GM12878 (cell line): ENCODE measurements at regions of chr5 and their contacts with region 1.

Region 1: DNA sequence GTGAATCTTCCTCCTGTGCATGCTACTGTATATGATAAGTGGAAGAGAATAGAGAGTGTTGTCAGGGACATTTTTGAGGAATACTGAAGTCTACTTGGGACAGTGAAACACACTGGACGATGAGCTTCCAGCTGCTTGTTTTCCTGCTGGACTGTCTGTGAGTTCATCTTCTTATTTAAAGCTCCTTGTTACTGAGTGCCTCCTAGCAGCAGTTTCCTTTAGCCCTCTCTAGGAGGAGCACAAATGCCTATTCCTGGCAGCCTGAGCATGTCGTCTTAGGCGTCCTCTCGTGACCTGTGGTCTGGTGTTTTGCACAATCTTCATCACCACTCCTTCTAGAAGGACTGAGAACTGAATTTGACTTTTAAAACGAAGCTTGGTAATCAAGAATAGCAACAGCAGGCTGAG is 43.8 kb downstream of the ANKRD33B start:
- DNase-seq: peak; percentile 63
- ATAC-seq: peak; percentile 73
- H3K4me3 ChIP-seq: peak overlapping the region; percentile 16
- H3K27ac ChIP-seq: peak overlapping the region; percentile 87
- H3K4me1 ChIP-seq: peaks cover 56% of the 10 kb centered on the region
- H3K27me3 ChIP-seq: no peaks in the 10 kb centered on the region
- CTCF ChIP-seq: peak; percentile 32 to 52 (median 32); a peak in 4 of 6 replicates
- EP300 ChIP-seq: peak; percentile 58 to 63; a peak in 2 of 4 replicates
- POLR2A ChIP-seq: no peak
- RAD21 ChIP-seq: peak; percentile 51

Region 2: GRCh38 chr5:10583663-10584572 is 23.8 kb before region 1 on chr5:
- CTCF ChIA-PET with region 1: interaction called, 4 read pairs
- POLR2A ChIA-PET with region 1: interaction called, 10 read pairs
- RAD21 ChIA-PET with region 1: interaction called, 46 read pairs
- SMC1A ChIA-PET with region 1: interaction called, 10 read pairs
- in situ Hi-C with region 1: no loop called
- intact Hi-C with region 1: no loop called
- DNase-seq: no peak
- ATAC-seq: no peak
- H3K4me3 ChIP-seq: no peak overlapping the region
- H3K27ac ChIP-seq: peak overlapping the region; percentile 20; the same call in 1 of the 2 replicates
- H3K4me1 ChIP-seq: peaks cover 88% of the 10 kb centered on the region
- H3K27me3 ChIP-seq: no peaks in the 10 kb centered on the region
- CTCF ChIP-seq: no peak
- EP300 ChIP-seq: no peak
- POLR2A ChIP-seq: no peak
- RAD21 ChIP-seq: no peak

Region 3: GRCh38 chr5:10595678-10596309 is 11.9 kb before region 1 on chr5:
- CTCF ChIA-PET with region 1: interaction called, 3 read pairs
- POLR2A ChIA-PET with region 1: interaction called, 21 read pairs
- RAD21 ChIA-PET with region 1: interaction called, 10 read pairs
- SMC1A ChIA-PET with region 1: interaction called, 19 read pairs
- in situ Hi-C with region 1: no loop called
- intact Hi-C with region 1: no loop called
- DNase-seq: no peak
- ATAC-seq: peak; percentile 59
- H3K4me3 ChIP-seq: peak overlapping the region; percentile 34; the same call in 1 of the 2 replicates
- H3K27ac ChIP-seq: peak overlapping the region; percentile 48
- H3K4me1 ChIP-seq: peaks cover 89% of the 10 kb centered on the region
- H3K27me3 ChIP-seq: no peaks in the 10 kb centered on the region
- CTCF ChIP-seq: no peak
- EP300 ChIP-seq: peak in 1 of 2 experiments; percentile 24; a peak in 1 of 4 replicates
- POLR2A ChIP-seq: no peak
- RAD21 ChIP-seq: no peak

Region 4: GRCh38 chr5:10635257-10635866 is 27.7 kb after region 1 on chr5:
- CTCF ChIA-PET with region 1: interaction called, 157 read pairs
- POLR2A ChIA-PET with region 1: interaction called, 14 read pairs
- RAD21 ChIA-PET with region 1: interaction called, 79 read pairs
- SMC1A ChIA-PET with region 1: interaction called, 192 read pairs
- in situ Hi-C with region 1: no loop called
- intact Hi-C with region 1: loop called (anchors 1 kb)
- DNase-seq: peak; percentile 94
- ATAC-seq: peak; percentile 66
- H3K4me3 ChIP-seq: peak overlapping the region; percentile 51
- H3K27ac ChIP-seq: peak overlapping the region; percentile 93
- H3K4me1 ChIP-seq: peaks cover 59% of the 10 kb centered on the region
- H3K27me3 ChIP-seq: no peaks in the 10 kb centered on the region
- CTCF ChIP-seq: no peak
- EP300 ChIP-seq: peak; percentile 89 to 98
- POLR2A ChIP-seq: peak; percentile 39; the same call in 1 of the 2 replicates
- RAD21 ChIP-seq: peak; percentile 5; the same call in 1 of the 2 replicates

Region 5: GRCh38 chr5:10689391-10690081 is 81.9 kb after region 1 on chr5:
- CTCF ChIA-PET with region 1: interaction called, 15 read pairs
- POLR2A ChIA-PET with region 1: no interaction called
- RAD21 ChIA-PET with region 1: interaction called, 13 read pairs
- SMC1A ChIA-PET with region 1: interaction called, 4 read pairs
- in situ Hi-C with region 1: no loop called
- intact Hi-C with region 1: no loop called
- DNase-seq: no peak
- ATAC-seq: peak; percentile 75
- H3K4me3 ChIP-seq: no peak overlapping the region
- H3K27ac ChIP-seq: no peak overlapping the region
- H3K4me1 ChIP-seq: peaks cover 19% of the 10 kb centered on the region
- H3K27me3 ChIP-seq: no peaks in the 10 kb centered on the region
- CTCF ChIP-seq: peak; percentile 36 to 79 (median 67); a peak in 5 of 6 replicates
- EP300 ChIP-seq: no peak
- POLR2A ChIP-seq: no peak
- RAD21 ChIP-seq: peak; percentile 76

Region 6: DNA sequence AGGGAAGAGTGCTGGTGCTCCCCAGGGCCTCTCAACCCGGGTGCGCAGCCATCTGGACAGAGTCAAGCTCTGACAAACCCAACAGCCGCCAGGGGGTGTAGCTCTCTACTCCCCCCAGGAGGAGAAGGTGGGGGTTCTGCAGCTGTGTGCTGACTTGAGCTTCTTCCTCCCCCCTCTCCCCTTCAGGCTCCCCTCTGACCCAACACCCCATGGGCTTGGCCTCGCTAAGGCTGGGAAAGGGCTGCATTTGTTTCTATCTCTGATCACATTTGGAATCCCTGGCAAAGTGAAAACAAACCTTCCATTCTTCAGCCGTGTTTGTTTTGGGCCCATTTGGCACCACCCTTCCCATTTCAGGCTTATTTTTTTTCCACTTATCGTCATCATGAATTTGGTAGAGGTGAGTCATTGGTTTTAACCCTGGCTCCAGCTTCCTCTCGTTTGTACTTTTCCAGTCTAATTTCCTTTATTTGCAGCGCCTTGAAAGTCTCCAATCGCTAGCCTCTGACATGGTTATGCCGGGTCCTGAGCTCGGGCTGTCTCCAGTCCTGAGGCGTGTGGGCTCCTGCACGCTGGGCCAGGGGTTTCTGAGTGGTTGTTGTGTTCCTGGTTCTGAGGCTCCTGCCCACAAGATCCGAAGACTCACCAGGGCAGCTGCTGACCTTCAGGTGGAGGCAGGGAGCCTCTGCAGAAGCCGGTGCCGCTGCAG is 117.3 kb after region 1 on chr5:
- CTCF ChIA-PET with region 1: no interaction called
- POLR2A ChIA-PET with region 1: no interaction called
- RAD21 ChIA-PET with region 1: no interaction called
- SMC1A ChIA-PET with region 1: no interaction called
- in situ Hi-C with region 1: no loop called
- intact Hi-C with region 1: no loop called
- DNase-seq: no peak
- ATAC-seq: no peak
- H3K4me3 ChIP-seq: no peak overlapping the region
- H3K27ac ChIP-seq: no peak overlapping the region
- H3K4me1 ChIP-seq: peaks cover 10% of the 10 kb centered on the region
- H3K27me3 ChIP-seq: no peaks in the 10 kb centered on the region
- CTCF ChIP-seq: peak in 1 of 3 experiments; percentile 12; a peak in 1 of 6 replicates
- EP300 ChIP-seq: no peak
- POLR2A ChIP-seq: no peak
- RAD21 ChIP-seq: no peak